Mammary epithelial cell (primary cell): ENCODE measurements at regions of chr13 and their contacts with region 1.

Region 1: GRCh38 chr13:97855570-97856303 is 97.7 kb upstream of the IPO5 start:
- DNase-seq: peak; percentile 39
- H3K4me3 ChIP-seq: no peak overlapping the region
- H3K27ac ChIP-seq: no peak overlapping the region
- H3K4me1 ChIP-seq: no peaks in the 10 kb centered on the region
- H3K27me3 ChIP-seq: no peaks in the 10 kb centered on the region
- CTCF ChIP-seq: peak; percentile 83 to 93

Region 2: DNA sequence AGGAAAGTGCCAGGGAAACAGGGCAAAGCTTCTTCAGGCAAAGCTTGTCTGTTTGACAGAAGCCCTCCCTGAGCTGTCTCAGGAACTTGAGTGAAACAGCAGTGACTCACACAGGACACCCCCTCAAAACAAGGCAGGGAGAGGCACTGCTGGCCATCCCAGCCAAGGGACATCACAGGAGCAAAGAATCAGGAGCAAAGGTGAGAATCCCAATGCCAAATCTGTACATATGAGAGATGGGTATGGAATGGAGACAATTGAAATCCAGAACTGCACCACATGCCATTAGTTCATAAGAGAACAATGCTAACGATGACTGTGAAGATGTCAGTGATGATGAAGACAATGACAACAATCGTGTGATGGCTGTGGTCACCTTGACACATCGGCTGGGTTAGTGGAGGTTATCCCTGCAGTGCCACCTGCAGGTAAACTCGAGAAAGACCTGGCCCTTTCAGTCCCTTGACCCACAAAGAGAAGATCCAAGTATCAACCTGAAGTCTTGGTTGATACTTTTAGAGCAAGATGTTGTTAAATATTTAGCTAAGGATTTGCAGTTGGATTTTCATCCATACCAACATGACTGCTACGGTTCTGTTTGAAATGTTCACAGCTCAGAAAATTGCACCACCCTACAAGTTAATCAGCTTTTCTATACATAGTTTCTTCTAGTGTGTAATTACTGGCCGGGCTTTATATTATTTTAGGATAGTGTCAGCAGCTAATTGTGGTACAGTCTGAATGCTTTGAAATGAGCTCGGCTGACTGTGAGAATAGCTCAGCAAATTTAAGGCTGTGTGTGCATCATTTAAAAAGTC is 55.8 kb after region 1 on chr13:
- CTCF ChIA-PET with region 1: no interaction called
- dilution Hi-C with region 1: no loop called
- in situ Hi-C with region 1: no loop called
- intact Hi-C with region 1: loop called (anchors 1 kb)
- DNase-seq: peak; percentile 29
- H3K4me3 ChIP-seq: no peak overlapping the region
- H3K27ac ChIP-seq: no peak overlapping the region
- H3K4me1 ChIP-seq: no peaks in the 10 kb centered on the region
- H3K27me3 ChIP-seq: no peaks in the 10 kb centered on the region
- CTCF ChIP-seq: peak; percentile 44 to 58

Region 3: DNA sequence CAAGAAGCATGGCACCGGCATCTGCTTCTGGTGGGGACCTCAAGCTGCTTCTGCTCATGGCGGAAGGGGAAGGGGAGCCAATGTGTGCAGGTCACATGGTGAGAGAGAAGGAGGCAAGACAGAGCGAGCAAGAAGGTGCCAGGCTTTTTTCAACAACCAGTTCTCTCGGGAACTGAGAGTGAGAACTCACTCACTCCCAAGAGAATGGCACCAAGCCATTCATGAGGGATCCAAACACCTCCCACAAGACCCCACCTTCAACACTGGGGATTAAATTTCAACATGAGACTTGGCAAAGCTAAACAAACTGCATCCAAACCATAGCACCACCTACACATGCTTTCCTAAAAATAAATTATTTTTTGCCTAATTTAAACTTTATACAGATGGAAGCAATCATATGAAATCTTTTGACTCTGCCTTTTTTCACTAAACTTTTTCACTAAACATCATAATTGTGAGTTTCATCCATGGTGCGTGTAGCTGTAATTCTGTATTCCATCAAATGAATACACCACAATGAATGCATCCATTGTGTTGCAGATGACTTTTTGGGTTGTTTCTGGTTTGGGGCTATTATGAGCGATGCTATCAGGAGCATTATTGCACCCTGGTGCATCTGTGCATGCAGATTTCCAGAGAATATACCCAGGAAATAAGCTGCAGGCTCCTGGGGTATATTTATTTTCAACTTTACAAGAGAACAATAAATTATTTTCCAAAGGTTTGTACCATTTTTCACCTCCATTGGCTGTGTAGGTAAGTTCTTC is 83.2 kb after region 1 on chr13:
- CTCF ChIA-PET with region 1: interaction called, 10 read pairs
- dilution Hi-C with region 1: no loop called
- in situ Hi-C with region 1: no loop called
- intact Hi-C with region 1: no loop called
- DNase-seq: no peak
- H3K4me3 ChIP-seq: no peak overlapping the region
- H3K27ac ChIP-seq: no peak overlapping the region
- H3K4me1 ChIP-seq: no peaks in the 10 kb centered on the region
- H3K27me3 ChIP-seq: no peaks in the 10 kb centered on the region
- CTCF ChIP-seq: no peak

Region 4: DNA sequence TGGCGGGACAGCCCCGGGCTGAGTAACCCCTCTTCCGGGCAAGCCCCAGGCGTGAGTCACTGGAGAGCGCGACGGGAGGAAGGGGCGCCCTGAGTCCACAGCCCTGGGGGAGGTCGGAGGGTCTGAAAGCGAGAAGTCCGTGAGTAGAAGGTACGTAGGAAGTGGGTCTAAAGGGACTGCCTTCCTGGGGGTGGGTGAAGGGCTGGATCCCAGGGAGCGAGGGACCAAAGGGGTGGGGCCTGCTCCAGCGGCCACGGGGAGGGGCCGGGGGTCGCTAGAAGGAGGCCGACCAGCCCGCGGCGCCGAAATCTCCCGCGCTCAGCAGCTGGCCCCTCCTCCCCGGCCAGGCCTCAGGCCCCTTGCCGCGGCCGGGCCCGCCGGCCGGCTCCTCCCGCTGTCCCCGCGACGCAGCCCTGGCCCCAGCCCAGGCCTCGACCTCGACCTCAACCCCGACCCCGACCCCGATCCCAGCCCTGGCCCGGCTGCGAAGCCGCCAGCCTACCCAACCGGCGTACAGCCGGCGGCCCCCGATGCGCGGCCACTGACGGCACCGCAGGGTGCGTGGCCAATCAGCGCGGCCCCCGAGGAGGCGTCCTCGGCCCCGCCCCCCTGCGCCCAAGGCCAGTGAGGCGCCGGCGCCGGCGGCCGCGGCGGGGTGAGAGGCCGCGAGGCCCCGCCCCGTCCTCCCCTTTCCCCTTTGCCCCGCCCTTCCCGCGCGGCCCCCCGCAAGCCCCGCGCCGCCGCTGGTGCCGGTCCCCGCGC is 120.3 kb after region 1 on chr13:
- CTCF ChIA-PET with region 1: no interaction called
- dilution Hi-C with region 1: no loop called
- in situ Hi-C with region 1: loop called in 1 of 2 experiments (anchors 10 kb)
- intact Hi-C with region 1: loop called (anchors 1 kb)
- DNase-seq: peak; percentile 83
- H3K4me3 ChIP-seq: peak overlapping the region; percentile 70 to 98 (median 88)
- H3K27ac ChIP-seq: peak overlapping the region; percentile 80
- H3K4me1 ChIP-seq: peaks cover 13% of the 10 kb centered on the region
- H3K27me3 ChIP-seq: no peaks in the 10 kb centered on the region
- CTCF ChIP-seq: no peak

Region 5: GRCh38 chr13:97986835-97987234 is 131.1 kb after region 1 on chr13:
- CTCF ChIA-PET with region 1: no interaction called
- dilution Hi-C with region 1: no loop called
- in situ Hi-C with region 1: loop called in 1 of 2 experiments (anchors 10 kb)
- intact Hi-C with region 1: no loop called
- DNase-seq: no peak
- H3K4me3 ChIP-seq: no peak overlapping the region
- H3K27ac ChIP-seq: no peak overlapping the region
- H3K4me1 ChIP-seq: no peaks in the 10 kb centered on the region
- H3K27me3 ChIP-seq: no peaks in the 10 kb centered on the region
- CTCF ChIP-seq: no peak

Region 6: GRCh38 chr13:98445340-98446233 is 589.9 kb after region 1 on chr13:
- CTCF ChIA-PET with region 1: no interaction called
- dilution Hi-C with region 1: no loop called
- in situ Hi-C with region 1: no loop called
- intact Hi-C with region 1: loop called (anchors 5 kb)
- DNase-seq: peak; percentile 50
- H3K4me3 ChIP-seq: no peak overlapping the region
- H3K27ac ChIP-seq: no peak overlapping the region
- H3K4me1 ChIP-seq: peaks cover 24% of the 10 kb centered on the region
- H3K27me3 ChIP-seq: no peaks in the 10 kb centered on the region
- CTCF ChIP-seq: peak; percentile 86 to 97

Region 7: GRCh38 chr13:98672944-98673545 is 817.3 kb after region 1 on chr13:
- CTCF ChIA-PET with region 1: no interaction called
- dilution Hi-C with region 1: no loop called
- in situ Hi-C with region 1: loop called in 1 of 2 experiments (anchors 10 kb)
- intact Hi-C with region 1: loop called (anchors 1 kb)
- DNase-seq: peak; percentile 48
- H3K4me3 ChIP-seq: no peak overlapping the region
- H3K27ac ChIP-seq: no peak overlapping the region
- H3K4me1 ChIP-seq: peaks cover 4% of the 10 kb centered on the region
- H3K27me3 ChIP-seq: no peaks in the 10 kb centered on the region
- CTCF ChIP-seq: peak; percentile 84 to 87